AG04450 (cell line): ENCODE measurements at regions of chr15 and their contacts with region 1.

Region 1: DNA sequence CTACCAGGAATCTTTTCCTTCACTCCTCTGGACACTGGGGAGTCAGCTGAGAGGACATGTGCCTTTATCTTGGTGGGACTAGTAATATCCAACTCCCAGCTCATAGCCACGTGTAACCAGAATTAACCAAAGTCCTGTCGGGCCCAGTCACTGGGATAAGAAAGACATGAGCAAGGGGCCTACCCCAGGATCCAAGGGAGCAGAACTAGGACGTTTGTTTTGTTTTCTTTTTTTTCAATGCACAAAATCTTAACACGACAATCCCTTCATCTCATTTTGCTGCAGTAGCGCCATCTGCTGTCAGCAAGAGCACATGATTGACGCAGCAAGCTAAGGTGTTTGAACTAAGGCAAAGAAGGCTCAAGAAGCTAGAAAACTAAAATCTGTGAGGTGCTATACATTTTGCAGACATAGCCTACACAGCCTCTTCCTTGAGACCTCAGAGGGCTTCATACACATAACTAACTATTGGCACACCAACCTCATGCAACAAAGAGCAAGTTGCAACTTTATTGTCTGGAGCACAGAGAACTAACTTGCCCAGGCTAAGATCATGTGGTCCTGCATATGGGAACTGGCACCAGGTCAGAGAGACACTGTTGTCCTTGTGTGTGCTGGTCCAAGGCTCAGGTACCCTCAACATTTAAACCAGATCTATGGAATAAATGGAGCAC is 43.6 kb downstream of the RLBP1 start:
- DNase-seq: peak; percentile 57
- H3K4me3 ChIP-seq: no peak overlapping the region
- H3K27ac ChIP-seq: no peak overlapping the region
- H3K27me3 ChIP-seq: no peaks in the 10 kb centered on the region
- CTCF ChIP-seq: peak; percentile 88

Region 2: DNA sequence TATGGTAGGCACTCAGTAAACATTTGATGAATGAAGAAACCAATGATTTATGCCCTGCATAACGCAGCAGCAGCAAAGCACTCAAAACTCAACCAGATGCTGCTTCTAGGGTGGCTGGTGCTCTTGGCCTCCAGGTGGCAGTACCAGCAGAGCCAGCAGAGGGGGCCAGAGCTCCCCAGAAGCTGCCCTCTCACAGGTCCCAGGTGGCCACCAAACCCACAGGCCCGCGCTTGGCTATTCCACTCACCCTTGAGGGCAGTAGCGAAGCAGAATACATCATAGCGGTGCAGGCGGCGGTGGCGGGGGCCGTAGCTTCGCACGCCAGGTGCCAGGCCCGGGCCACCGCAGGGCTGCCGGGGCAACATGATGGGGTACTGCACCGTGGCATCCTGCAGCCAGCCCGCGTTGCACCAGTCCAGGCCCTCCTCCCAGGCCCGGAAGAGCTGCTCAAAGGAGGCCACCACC is 299.0 kb before region 1 on chr15:
- CTCF ChIA-PET with region 1: interaction called, 17 read pairs
- POLR2A ChIA-PET with region 1: no interaction called
- DNase-seq: no peak
- H3K4me3 ChIP-seq: no peak overlapping the region
- H3K27ac ChIP-seq: no peak overlapping the region
- H3K27me3 ChIP-seq: peaks cover 1% of the 10 kb centered on the region
- CTCF ChIP-seq: peak; percentile 81

Region 3: GRCh38 chr15:89034288-89034687 is 143.5 kb before region 1 on chr15:
- CTCF ChIA-PET with region 1: interaction called, 18 read pairs
- POLR2A ChIA-PET with region 1: no interaction called
- DNase-seq: no peak
- H3K4me3 ChIP-seq: no peak overlapping the region
- H3K27ac ChIP-seq: no peak overlapping the region
- H3K27me3 ChIP-seq: no peaks in the 10 kb centered on the region
- CTCF ChIP-seq: peak; percentile 48

Region 4: GRCh38 chr15:89052474-89052873 is 125.3 kb before region 1 on chr15:
- CTCF ChIA-PET with region 1: interaction called, 222 read pairs
- POLR2A ChIA-PET with region 1: no interaction called
- DNase-seq: peak; percentile 83
- H3K4me3 ChIP-seq: no peak overlapping the region
- H3K27ac ChIP-seq: peak overlapping the region; percentile 84
- H3K27me3 ChIP-seq: no peaks in the 10 kb centered on the region
- CTCF ChIP-seq: no peak

Region 5: DNA sequence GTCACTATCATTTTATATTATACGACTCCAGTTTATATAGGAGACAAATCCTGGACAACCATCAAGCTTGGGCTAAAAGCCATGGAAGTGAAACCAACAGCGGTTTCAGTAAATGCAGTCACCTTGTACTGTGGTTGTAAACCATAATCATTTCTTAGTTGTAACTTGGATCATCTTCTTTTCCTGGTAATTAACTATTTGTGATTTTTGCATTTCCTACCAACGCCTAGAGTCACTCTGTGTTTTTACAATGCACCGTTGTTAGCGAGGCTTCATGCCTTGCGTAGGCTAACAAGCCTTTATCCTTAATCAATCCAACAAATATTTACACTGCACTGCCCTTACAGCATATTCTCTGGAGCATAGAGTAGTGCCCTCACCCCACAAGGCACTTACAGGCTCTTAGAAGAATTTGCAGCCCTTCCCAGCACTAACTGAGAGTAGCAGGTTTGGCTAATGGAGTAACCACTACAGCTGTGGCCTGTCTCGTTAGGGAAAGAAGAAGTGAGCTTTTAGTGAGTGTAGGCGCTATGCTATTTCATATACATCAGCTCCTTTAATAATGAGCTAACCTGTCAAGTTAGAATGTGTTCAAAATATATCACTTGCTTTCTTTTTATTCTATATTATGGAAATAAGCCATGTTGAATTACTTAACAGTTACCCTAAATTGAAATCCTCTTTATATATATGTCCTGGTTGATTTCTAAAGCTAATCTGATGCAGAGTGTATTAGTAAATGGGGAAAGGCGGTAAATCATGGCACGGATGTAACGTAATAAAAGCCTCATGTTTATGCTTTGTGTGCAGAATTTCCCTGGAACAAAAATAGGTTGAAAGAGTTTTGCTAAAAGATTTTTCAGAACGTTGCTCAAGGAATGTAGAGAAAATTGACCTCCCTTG is 26.8 kb before region 1 on chr15:
- CTCF ChIA-PET with region 1: interaction called, 12 read pairs
- POLR2A ChIA-PET with region 1: no interaction called
- DNase-seq: no peak
- H3K4me3 ChIP-seq: no peak overlapping the region
- H3K27ac ChIP-seq: no peak overlapping the region
- H3K27me3 ChIP-seq: no peaks in the 10 kb centered on the region
- CTCF ChIP-seq: no peak